GM23248 (cell line): ENCODE measurements at regions of chr9 and their contacts with region 1.

Region 1: DNA sequence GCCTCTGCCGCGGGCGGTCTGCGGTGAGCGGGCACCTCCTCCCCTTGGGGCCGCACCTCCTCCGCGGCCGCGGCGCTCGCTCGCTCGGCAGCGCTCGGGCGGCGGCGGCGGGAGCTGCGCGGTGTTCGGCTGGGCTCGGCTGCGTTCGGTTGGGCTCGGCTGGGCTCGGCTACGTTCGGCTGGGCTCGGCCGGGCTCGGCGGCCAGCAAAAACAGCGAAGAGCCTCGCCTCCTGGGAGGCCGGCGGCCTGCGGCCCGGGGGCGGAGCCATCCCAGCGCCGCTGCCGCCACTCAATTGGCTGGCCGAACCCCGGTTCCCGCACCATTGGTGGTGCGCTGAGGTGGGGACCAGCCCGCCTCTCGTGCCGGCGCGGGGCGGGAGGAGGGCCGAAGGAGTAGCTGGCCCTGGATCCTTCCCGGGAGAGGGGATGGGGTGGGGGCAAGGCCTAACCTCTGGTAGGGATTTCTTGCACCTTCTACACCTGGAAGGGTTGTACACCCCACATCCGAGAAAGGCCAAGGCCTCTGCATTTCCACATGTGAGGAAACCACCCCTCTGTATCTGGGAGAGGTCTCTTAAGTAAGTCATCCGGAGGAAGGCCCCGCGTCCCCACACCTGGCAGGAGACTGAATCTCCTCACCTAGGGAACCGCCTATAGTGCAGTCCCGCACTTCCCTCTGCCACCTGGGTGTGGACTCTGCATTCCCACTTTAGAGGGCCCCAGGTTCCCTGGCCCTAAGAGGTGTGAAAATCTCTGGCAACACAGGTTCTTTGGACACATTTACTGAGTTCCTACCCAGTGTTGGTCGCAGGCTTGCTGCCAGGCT is at the start of gene ENHO:
- DNase-seq: peak; percentile 93
- H3K4me3 ChIP-seq: peak within 1 kb of the TSS; percentile 73
- H3K27ac ChIP-seq: no peak within 1 kb of the TSS
- H3K4me1 ChIP-seq: no peaks in the 10 kb centered on the region
- H3K27me3 ChIP-seq: peaks cover 28% of the 10 kb centered on the region
- total RNA-seq, gene ENHO: not detected in 2 replicates

Region 2: DNA sequence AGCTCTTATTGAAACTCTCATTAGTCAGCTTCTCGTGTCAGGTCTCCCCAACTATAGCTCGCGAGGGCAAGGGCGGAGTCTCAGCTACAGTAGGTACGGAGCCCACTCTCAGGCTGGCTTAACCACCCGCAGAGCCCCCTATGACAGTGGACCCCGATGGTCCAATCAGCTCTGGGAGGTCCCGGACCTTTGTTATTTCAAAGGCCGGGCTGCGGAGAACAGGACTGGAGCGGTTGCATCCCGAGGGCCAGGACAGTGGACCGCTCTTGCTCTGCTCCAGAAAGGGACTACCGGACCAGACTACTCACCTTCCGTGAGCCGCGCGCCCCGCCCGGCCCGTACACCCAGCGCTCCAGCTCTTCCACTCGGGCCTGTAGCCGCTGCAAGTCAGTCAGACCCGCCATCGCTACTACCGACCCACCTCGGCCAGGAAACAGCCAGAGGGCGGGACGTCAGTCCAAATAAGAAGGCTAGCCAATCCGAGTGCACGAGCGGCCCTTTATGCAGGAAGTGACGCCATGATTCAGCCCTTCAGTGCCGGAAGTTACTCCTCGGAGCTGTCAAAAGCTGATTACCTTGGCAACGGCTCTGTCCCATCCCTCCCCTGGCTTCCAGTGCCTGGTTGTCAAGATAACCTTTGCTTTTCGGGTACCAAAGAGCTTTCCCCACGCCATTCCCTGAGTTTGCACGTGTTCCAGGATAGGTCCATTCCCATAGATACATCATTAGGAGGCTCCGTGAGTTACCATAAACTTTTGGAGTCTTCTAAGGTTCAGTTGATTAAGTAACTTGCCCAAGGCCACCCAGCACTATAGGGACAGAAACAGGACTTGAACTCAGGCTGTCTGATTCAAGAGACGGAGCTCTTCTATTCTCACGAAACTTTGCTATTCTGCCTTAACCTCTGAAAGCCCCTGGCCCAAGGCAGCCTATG is 97.1 kb after region 1 on chr9 and contains the start of gene DCTN3:
- in situ Hi-C with region 1: loop called (anchors 25 kb)
- DNase-seq: peak; percentile 100
- H3K4me3 ChIP-seq: peak within 1 kb of the TSS; percentile 91
- H3K27ac ChIP-seq: peak within 1 kb of the TSS; percentile 26
- H3K4me1 ChIP-seq: peaks cover 8% of the 10 kb centered on the region
- H3K27me3 ChIP-seq: peaks cover 18% of the 10 kb centered on the region
- total RNA-seq, gene DCTN3: 77.1 and 130 TPM in 2 replicates